Caco-2 (cell line): ENCODE measurements at regions of chr15 and their contacts with region 1.

Region 1: DNA sequence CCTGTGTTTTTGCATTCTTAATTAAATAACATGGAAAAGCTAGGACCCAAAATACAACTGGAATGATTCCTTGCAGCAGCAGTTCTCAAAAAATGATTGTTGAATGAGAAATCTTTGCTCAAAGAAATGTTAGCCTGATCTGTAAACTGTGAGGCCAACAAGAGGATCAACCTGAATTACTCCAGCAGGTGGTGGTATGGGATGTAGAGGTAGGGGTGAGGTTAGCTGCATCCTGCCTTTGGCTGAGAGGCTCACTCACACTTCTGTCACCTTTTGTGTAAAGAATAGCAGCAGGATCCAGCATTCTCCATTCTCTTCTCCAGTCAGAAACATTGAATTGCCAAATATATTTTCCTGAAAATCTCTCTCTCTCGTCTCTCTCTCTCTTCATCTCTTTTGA is 26.5 kb upstream of the FAM98B start:
- DNase-seq: no peak
- H3K4me3 ChIP-seq: no peak overlapping the region
- H3K4me3 Mint-ChIP-seq: no peak overlapping the region
- H3K27ac Mint-ChIP-seq: no peak overlapping the region
- H3K4me1 ChIP-seq: peaks cover 34% of the 10 kb centered on the region
- H3K4me1 Mint-ChIP-seq: peaks cover 12% of the 10 kb centered on the region
- H3K27me3 ChIP-seq: no peaks in the 10 kb centered on the region
- H3K27me3 Mint-ChIP-seq: no peaks in the 10 kb centered on the region
- CTCF ChIP-seq: no peak

Region 2: DNA sequence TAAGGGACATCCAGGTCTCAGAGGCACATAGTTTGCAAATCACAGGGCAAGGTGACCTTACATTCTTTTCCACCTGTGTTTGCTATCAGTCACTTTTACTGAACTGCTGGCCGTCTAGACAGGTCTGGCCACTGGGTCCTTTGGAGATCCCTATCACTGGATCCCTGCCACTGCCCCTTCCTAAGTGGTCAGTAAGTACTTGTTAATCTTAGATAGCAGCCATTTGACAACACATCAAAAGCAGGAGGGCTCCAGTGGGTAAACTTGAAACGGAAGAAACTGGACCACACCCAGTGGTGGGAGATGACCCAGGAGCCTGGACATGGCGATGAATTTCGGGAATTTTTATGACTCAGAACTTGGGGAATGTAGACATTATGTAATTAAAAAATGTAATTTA is 166.1 kb after region 1 on chr15:
- CTCF ChIA-PET with region 1: no interaction called
- POLR2A ChIA-PET with region 1: no interaction called
- intact Hi-C with region 1: loop called (anchors 1 kb)
- DNase-seq: peak; percentile 70 to 84
- H3K4me3 ChIP-seq: no peak overlapping the region
- H3K4me3 Mint-ChIP-seq: no peak overlapping the region
- H3K27ac Mint-ChIP-seq: no peak overlapping the region
- H3K4me1 ChIP-seq: peaks cover 41% of the 10 kb centered on the region
- H3K4me1 Mint-ChIP-seq: peaks cover 31% of the 10 kb centered on the region
- H3K27me3 ChIP-seq: no peaks in the 10 kb centered on the region
- H3K27me3 Mint-ChIP-seq: no peaks in the 10 kb centered on the region
- CTCF ChIP-seq: no peak